Activated naive CD4-positive, alpha-beta T cell treated with anti-CD3 and anti-CD28 coated beads for 36 hours (primary cell): ENCODE measurements at regions of chr17 and their contacts with region 1.

Region 1: DNA sequence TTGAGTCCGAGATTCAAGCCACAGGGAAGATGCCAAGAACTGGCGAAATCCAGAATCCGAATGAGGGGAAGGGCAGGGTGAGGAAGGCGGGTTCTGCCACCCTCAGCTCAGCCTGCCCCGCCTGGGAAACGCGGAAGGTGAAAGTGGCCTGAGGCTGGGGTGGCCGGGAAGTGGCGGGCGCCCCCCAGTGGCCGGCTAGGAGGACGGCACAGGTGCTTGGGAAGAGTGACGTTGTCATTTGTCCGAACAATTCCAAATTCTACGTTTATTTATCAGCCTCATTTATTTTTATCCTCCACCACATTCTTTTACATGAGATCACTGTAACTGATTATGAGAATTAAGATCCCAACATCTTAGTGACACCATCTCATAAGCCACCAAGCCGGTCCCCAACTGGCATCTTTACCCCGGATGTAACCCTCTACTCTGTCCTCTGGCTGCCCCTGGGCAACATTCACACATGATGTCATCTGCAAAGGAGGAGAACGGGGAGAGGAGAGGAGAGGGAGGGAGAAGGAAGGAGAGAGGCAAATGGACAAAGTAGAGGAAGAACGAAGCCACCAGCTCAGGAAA is 21.3 kb downstream of the SRCIN1 start:
- DNase-seq: peak; percentile 71
- H3K4me3 Mint-ChIP-seq: no peak overlapping the region
- H3K27ac Mint-ChIP-seq: no peak overlapping the region
- H3K4me1 Mint-ChIP-seq: peaks cover 4% of the 10 kb centered on the region
- H3K27me3 Mint-ChIP-seq: peaks cover 57% of the 10 kb centered on the region

Region 2: DNA sequence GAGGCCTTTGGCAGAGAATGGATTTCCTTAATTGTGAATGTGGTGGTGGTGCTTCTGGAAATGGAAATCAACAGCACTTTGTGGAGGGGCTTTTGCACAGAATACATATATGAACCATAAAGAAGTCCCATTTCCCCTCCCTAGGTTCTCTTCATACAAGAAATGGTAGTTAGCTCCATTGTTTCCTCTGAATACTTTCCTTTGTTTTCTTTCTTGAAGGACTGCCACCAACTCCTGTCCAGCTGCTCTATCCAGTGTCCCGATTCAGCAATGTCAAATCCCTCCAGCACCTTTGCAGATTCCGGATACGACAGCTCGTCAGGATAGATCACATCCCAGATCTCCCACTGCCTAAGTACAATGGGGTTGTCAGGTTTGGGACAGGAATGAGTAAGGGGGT is 189.3 kb before region 1 on chr17:
- CTCF ChIA-PET with region 1: no interaction called
- intact Hi-C with region 1: no loop called
- DNase-seq: no peak
- H3K4me3 Mint-ChIP-seq: no peak overlapping the region
- H3K27ac Mint-ChIP-seq: no peak overlapping the region
- H3K4me1 Mint-ChIP-seq: no peaks in the 10 kb centered on the region
- H3K27me3 Mint-ChIP-seq: no peaks in the 10 kb centered on the region

Region 3: GRCh38 chr17:38563362-38564253 is 20.8 kb before region 1 on chr17:
- CTCF ChIA-PET with region 1: interaction called, 171 read pairs
- intact Hi-C with region 1: loop called (anchors 1 kb)
- DNase-seq: no peak
- H3K4me3 Mint-ChIP-seq: no peak overlapping the region
- H3K27ac Mint-ChIP-seq: no peak overlapping the region
- H3K4me1 Mint-ChIP-seq: peaks cover 30% of the 10 kb centered on the region
- H3K27me3 Mint-ChIP-seq: peaks cover 73% of the 10 kb centered on the region

Region 4: DNA sequence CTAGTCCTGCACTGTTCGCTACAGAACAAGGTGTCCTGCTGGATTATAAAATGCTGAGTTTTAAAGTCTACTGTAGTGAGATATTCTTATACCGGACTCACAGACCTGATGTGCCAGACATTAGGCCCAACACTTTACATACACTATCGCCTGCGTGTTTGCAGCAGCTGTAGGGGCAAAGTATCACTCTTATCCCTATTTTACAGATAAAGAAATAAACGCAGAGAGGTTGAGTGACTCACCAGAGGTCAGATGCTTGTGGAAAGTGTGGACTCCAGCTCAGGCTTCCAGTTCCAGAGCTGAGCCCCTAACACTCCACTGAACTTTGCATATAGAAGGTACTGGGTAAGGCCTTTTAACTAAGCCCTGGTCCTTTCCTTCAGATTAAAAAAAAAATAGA is 519.6 kb after region 1 on chr17:
- CTCF ChIA-PET with region 1: no interaction called
- intact Hi-C with region 1: no loop called
- DNase-seq: no peak
- H3K4me3 Mint-ChIP-seq: no peak overlapping the region
- H3K27ac Mint-ChIP-seq: no peak overlapping the region
- H3K4me1 Mint-ChIP-seq: peaks cover 21% of the 10 kb centered on the region
- H3K27me3 Mint-ChIP-seq: no peaks in the 10 kb centered on the region